Gastrocnemius medialis (tissue), 4 donors: ENCODE measurements at regions of chr12 and their contacts with region 1.

Region 1: DNA sequence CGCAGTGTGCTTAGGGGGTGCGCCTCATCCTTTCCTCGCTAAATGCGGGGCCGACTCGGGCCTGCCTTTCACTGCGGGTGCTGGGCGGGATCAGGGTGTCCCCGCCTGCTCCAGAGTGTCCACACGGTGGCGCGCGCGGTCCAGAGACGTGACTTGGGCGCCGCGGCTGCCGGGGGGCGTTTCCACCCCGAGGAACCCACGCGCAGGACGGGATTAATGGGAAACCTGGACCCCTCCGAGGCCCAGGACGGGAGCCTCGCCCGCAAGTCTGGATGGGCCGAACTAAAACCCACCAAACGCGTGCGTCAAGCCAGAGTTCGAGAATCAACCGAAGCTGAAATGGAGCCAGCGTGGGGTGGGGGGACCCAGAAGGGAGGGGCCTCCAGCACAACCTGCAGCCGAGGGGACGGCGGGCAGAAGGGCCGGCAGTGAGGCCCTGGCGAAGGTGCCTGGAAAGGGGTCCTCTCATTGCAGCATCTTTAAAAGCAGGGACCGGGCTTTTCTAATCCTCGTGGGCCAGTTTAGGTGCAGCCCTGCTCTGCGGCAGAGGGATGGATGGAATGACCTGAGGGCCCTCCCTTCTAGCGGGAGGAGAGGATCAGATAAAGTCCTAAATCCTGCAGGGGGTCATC is 93.3 kb downstream of the NINJ2 start:
- DNase-seq: peak; percentile 67 to 83
- ATAC-seq: peak; percentile 41 to 52
- H3K4me3 ChIP-seq: peak overlapping the region; percentile 63 to 74 (median 71)
- H3K27ac ChIP-seq: peak overlapping the region; percentile 86 to 95 (median 92)
- H3K4me1 ChIP-seq: peaks cover 20 to 22% of the 10 kb centered on the region in 2 donors
- H3K27me3 ChIP-seq: no peaks in the 10 kb centered on the region
- CTCF ChIP-seq: peak; percentile 87 to 97 (median 97)
- POLR2A ChIP-seq: no peak

Region 2: GRCh38 chr12:510071-510825 is 59.7 kb before region 1 on chr12:
- in situ Hi-C with region 1: no loop called
- intact Hi-C with region 1: no loop called
- DNase-seq: no peak
- ATAC-seq: no peak
- H3K4me3 ChIP-seq: no peak overlapping the region
- H3K27ac ChIP-seq: no peak overlapping the region
- H3K4me1 ChIP-seq: no peaks in the 10 kb centered on the region
- H3K27me3 ChIP-seq: peaks cover 0 to 4% (median 0%) of the 10 kb centered on the region in 3 donors
- CTCF ChIP-seq: no peak
- POLR2A ChIP-seq: no peak

Region 3: GRCh38 chr12:642633-643474 is 72.9 kb after region 1 on chr12:
- in situ Hi-C with region 1: loop called in 3 of 4 experiments (anchors 5 to 10 kb)
- intact Hi-C with region 1: no loop called
- DNase-seq: peak; percentile 61 to 78
- ATAC-seq: peak; percentile 9 to 37
- H3K4me3 ChIP-seq: peak overlapping the region; percentile 72 to 81 (median 78)
- H3K27ac ChIP-seq: peak overlapping the region; percentile 91 to 99 (median 96)
- H3K4me1 ChIP-seq: peaks cover 57 to 84% of the 10 kb centered on the region in 2 donors
- H3K27me3 ChIP-seq: no peaks in the 10 kb centered on the region
- CTCF ChIP-seq: peak; percentile 13 to 61 (median 54)
- POLR2A ChIP-seq: peak; percentile 51 to 54

Region 4: DNA sequence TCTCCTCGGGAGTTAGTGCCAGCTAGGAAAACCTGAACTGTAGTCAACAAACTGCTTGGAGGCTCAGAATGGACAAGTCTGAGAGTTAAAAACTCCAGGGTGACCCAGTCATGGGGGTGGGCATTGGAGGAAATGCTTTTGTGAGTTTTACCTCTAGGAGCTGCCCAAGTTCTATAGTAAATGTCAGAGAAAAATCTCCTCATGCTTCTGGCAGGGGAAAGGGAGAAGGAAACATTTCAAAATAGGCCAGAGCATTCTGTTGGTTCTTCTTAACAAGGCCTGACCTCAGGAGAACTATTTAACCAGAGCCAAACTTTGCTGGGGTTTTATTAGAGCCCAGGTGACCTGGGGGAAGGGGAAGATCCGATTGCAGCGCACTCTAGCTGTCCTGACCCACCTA is 81.1 kb after region 1 on chr12:
- in situ Hi-C with region 1: loop called (anchors 5 to 10 kb)
- intact Hi-C with region 1: loop called (anchors 2 kb)
- DNase-seq: peak in 1 of 2 donors; percentile 44
- ATAC-seq: peak; percentile 37 to 69
- H3K4me3 ChIP-seq: no peak overlapping the region
- H3K27ac ChIP-seq: peak overlapping the region; percentile 68 to 77 (median 69)
- H3K4me1 ChIP-seq: peaks cover 31 to 34% of the 10 kb centered on the region in 2 donors
- H3K27me3 ChIP-seq: no peaks in the 10 kb centered on the region
- CTCF ChIP-seq: peak in 2 of 5 experiments; percentile 13 to 24
- POLR2A ChIP-seq: no peak

Region 5: GRCh38 chr12:810671-811415 is 240.9 kb after region 1 on chr12:
- in situ Hi-C with region 1: loop called (anchors 5 to 10 kb)
- intact Hi-C with region 1: loop called (anchors 1 kb)
- DNase-seq: no peak
- ATAC-seq: no peak
- H3K4me3 ChIP-seq: no peak overlapping the region
- H3K27ac ChIP-seq: peak overlapping the region in 3 of 4 donors; percentile 31 to 81 (median 44)
- H3K4me1 ChIP-seq: peaks cover 46 to 54% of the 10 kb centered on the region in 2 donors
- H3K27me3 ChIP-seq: no peaks in the 10 kb centered on the region
- CTCF ChIP-seq: no peak
- POLR2A ChIP-seq: no peak

Region 6: GRCh38 chr12:1594261-1595025 is 1024.5 kb after region 1 on chr12 and contains the start of gene FBXL14:
- in situ Hi-C with region 1: loop called in 3 of 4 experiments (anchors 25 kb)
- intact Hi-C with region 1: no loop called
- DNase-seq: peak; percentile 81 to 83
- ATAC-seq: peak; percentile 81 to 83
- H3K4me3 ChIP-seq: peak within 1 kb of the TSS; percentile 78 to 90 (median 86)
- H3K27ac ChIP-seq: peak within 1 kb of the TSS; percentile 83 to 92 (median 91)
- H3K4me1 ChIP-seq: peaks cover 30 to 39% of the 10 kb centered on the region in 2 donors
- H3K27me3 ChIP-seq: no peaks in the 10 kb centered on the region
- CTCF ChIP-seq: peak in 1 of 5 experiments; percentile 18
- POLR2A ChIP-seq: peak; percentile 24 to 55
- total RNA-seq, gene FBXL14: 5.8 to 11.5 (median 7.4) TPM

Region 7: DNA sequence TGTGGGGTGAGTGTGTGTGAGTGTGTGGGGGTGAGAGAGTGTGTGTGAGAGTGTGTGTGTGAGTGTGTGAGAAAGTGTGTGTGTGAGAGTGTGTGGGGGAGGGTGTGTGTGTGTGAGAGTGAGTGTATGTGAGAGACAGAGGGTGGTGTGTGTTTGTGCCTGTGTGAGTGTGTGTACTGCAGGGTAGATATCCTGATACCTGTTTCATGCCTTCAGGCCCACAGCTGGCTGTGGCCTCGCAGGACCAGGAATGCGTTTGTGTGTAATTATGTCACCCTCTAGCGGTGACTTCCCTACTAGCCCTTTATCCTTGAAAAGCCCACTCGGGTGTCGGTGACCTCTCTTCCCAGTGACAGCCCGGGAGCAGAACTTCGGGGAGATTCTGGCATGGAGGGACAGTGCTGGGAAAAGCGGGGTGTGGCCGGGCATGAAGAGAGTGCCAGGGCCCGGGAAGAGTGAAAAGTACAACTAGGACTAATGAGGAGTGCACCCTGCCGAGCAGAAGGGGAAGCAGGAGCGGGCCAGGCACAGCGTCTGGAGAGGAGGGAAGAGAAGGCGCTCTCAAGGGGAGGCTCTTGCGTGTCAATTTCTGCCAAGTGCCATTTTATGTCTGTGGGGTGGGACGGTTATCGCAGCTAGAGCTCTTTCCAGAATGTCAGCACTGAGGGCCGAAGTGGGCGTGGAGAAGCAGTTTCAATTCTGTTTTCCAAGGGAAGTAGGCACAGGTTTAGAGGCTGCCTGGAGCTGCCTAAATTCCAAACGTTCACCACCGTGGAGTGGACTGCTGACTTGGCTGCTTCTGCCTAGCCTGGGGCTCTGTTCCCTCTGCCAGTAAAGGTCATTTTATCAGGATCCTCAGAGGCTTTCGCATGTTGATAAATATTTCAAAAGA is 1035.5 kb after region 1 on chr12:
- in situ Hi-C with region 1: loop called in 1 of 4 experiments (anchors 25 kb)
- intact Hi-C with region 1: loop called (anchors 5 kb)
- DNase-seq: peak; percentile 47 to 59
- ATAC-seq: peak; percentile 80 to 87
- H3K4me3 ChIP-seq: peak overlapping the region; percentile 48 to 69 (median 62)
- H3K27ac ChIP-seq: peak overlapping the region; percentile 75 to 84 (median 80)
- H3K4me1 ChIP-seq: peaks cover 8 to 15% of the 10 kb centered on the region in 2 donors
- H3K27me3 ChIP-seq: no peaks in the 10 kb centered on the region
- CTCF ChIP-seq: peak; percentile 72 to 85 (median 77)
- POLR2A ChIP-seq: no peak